ENCODE measurements at regions of chr11 and their contacts with region 1.

Region 1: GRCh38 chr11:10307442-10308207 is 2.8 kb downstream of the ADM start:
- DNase-seq: peak; percentile 63
- H3K4me3 ChIP-seq: peak overlapping the region; percentile 94
- H3K27me3 ChIP-seq: no peaks in the 10 kb centered on the region
- CTCF ChIP-seq: peak; percentile 89

Region 2: GRCh38 chr11:9765320-9766020 is 542.2 kb before region 1 on chr11:
- CTCF ChIA-PET with region 1: no interaction called
- POLR2A ChIA-PET with region 1: interaction called, 17 read pairs
- DNase-seq: peak; percentile 73
- H3K4me3 ChIP-seq: no peak overlapping the region
- H3K27me3 ChIP-seq: no peaks in the 10 kb centered on the region
- CTCF ChIP-seq: no peak

Region 3: DNA sequence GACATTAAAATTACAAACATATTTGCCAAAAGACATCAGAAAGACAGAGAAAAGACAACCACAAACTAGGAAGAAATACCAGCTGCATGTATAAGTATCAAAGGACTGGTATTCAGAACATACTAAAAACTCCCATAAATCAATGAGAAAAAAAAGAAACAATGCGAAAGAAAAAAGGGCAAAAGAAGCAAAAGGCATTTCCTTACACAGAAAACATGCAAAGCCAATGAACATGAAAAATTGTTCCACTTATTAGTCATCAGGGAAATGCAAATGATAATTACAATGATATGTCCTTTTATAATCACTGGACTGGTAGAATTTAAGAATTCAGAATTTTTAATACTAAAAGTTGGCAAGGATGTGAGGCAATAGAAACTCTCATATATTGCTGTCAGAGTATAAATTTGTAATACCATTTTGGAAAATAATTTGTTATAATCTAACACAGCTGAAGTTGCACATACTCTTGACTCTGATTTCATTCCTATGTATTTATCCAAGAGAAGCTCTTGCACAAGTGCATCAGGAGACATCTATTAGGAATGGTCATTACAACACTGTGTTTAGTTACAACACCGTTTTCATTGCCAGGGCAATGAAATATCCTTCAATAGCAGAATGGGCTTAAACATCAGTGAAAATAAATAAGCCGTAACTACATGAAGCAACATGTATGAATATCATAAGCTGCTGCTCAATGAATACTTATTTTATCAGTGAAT is 364.1 kb before region 1 on chr11:
- CTCF ChIA-PET with region 1: no interaction called
- POLR2A ChIA-PET with region 1: interaction called, 13 read pairs
- DNase-seq: peak; percentile 96
- H3K4me3 ChIP-seq: no peak overlapping the region
- H3K27me3 ChIP-seq: no peaks in the 10 kb centered on the region
- CTCF ChIP-seq: no peak

Region 4: GRCh38 chr11:10317776-10318526 is 10.3 kb after region 1 on chr11:
- CTCF ChIA-PET with region 1: interaction called, 10 read pairs
- POLR2A ChIA-PET with region 1: interaction called, 4 read pairs
- DNase-seq: no peak
- H3K4me3 ChIP-seq: no peak overlapping the region
- H3K27me3 ChIP-seq: no peaks in the 10 kb centered on the region
- CTCF ChIP-seq: no peak

Region 5: GRCh38 chr11:10328314-10329090 is 20.9 kb after region 1 on chr11:
- CTCF ChIA-PET with region 1: interaction called, 27 read pairs
- POLR2A ChIA-PET with region 1: interaction called, 11 read pairs
- DNase-seq: peak; percentile 69
- H3K4me3 ChIP-seq: no peak overlapping the region
- H3K27me3 ChIP-seq: no peaks in the 10 kb centered on the region
- CTCF ChIP-seq: no peak

Region 6: GRCh38 chr11:10379022-10379421 is 71.4 kb after region 1 on chr11:
- CTCF ChIA-PET with region 1: interaction called, 7 read pairs
- POLR2A ChIA-PET with region 1: interaction called, 13 read pairs
- DNase-seq: no peak
- H3K4me3 ChIP-seq: no peak overlapping the region
- H3K27me3 ChIP-seq: no peaks in the 10 kb centered on the region
- CTCF ChIP-seq: no peak

Measured in BJ (cell line).